Activated CD4-positive, alpha-beta T cell treated with anti-CD3 and anti-CD28 coated beads, Interleukin-2, amount 10 ng/mL, durations not matched to agents 7 days and 5 days (primary cell): ENCODE measurements at regions of chr19 and their contacts with region 1.

Region 1: DNA sequence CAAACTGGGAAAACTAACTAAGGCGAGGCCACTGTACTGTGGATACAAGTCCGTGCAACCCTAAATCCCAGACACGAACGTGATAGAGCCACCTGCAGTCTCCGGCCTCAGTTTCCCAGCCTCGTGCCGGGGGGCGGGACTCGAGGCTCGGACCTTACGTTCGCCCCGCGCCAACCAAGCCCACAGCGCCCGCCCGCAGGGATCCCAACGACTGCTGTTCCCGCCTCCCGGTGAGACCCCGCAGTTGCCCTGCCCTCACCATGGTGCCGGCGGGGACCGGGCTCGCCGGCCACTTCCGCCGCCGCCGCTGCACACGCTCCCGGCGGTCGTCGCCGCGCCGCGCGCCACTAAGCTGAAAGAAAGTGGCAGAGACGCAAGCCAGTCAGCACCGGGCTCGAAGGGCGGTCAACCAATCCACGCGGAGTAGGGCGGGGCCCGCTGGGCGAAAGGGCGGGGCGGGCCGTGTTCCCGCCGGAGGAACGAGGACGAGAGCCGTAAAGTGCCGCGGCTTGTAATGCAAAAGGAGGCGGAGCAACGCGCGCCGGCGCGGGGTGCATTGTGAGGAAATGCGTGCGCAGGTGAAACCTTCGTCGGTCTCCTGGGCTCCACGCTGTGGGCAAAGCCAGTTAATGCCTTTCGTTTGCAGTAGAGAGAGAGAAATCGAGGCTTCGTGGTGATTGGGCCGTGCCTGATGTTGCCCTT is at the start of gene LSM4:
- DNase-seq: peak; percentile 100
- H3K4me3 Mint-ChIP-seq: peak within 1 kb of the TSS; percentile 93
- H3K27ac Mint-ChIP-seq: peak within 1 kb of the TSS; percentile 97
- H3K4me1 Mint-ChIP-seq: peaks cover 56% of the 10 kb centered on the region
- H3K27me3 Mint-ChIP-seq: no peaks in the 10 kb centered on the region
- total RNA-seq, gene LSM4: 156 to 181 TPM

Region 2: GRCh38 chr19:18271433-18271841 is 51.5 kb before region 1 on chr19:
- CTCF ChIA-PET with region 1: interaction called, 229 read pairs
- POLR2A ChIA-PET with region 1: interaction called, 4 read pairs
- DNase-seq: no peak
- H3K4me3 Mint-ChIP-seq: no peak overlapping the region
- H3K27ac Mint-ChIP-seq: no peak overlapping the region
- H3K4me1 Mint-ChIP-seq: peaks cover 18% of the 10 kb centered on the region
- H3K27me3 Mint-ChIP-seq: no peaks in the 10 kb centered on the region